HCT116 (cell line): ENCODE measurements at regions of chr11 and their contacts with region 1.

Region 1: GRCh38 chr11:9363954-9364912 is 20.2 kb upstream of the IPO7 start:
- DNase-seq: peak; percentile 97
- ATAC-seq: peak; percentile 88
- H3K4me3 ChIP-seq: peak overlapping the region; percentile 34 to 44
- H3K27ac ChIP-seq: peak overlapping the region; percentile 99
- H3K4me1 ChIP-seq: peaks cover 34 to 48% of the 10 kb centered on the region in 2 experiments
- H3K27me3 ChIP-seq: no peaks in the 10 kb centered on the region
- CTCF ChIP-seq: no peak
- POLR2A ChIP-seq: peak; percentile 8
- RAD21 ChIP-seq: peak; percentile 50

Region 2: DNA sequence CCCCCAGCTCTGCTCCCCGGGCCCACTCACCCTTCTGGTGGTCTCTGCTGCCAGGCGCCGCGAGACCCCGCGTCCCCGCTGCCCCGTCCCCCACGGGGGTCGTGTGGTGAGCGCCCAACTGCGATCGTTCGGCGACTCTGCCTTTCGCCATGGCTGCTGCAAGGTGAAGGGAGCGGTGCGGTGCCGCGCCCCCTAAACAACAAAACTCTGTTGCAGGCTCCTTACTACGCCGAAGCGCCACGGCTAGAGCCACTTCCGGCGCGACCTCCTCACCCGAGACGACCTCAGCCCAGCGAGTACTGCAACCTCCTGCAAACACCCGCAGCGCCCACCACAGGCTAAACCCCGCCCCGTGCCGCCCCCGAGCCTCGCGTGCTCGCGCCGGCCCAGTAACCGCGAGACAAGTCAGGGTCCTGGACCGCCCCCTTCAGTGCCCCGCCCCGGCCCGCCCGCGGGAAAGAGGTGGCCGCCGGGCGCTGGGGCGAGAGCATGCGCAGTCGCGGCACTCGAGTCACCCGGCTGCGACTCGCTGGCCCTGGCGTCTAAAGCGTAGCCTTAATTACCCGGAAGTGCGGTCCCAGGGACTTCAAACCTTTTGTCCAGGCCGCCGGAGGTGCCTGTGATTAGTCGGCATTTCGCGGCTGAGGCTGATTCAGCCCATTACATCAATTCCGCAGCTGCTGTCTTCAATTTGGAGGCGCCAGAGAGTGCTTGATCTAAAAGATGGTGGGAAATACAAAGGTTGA is 49.8 kb before region 1 on chr11 and contains the start of gene TMEM41B:
- CTCF ChIA-PET with region 1: no interaction called
- POLR2A ChIA-PET with region 1: interaction called, 4 read pairs
- RAD21 ChIA-PET with region 1: no interaction called
- intact Hi-C with region 1: loop called (anchors 1 kb)
- DNase-seq: peak; percentile 97
- ATAC-seq: peak; percentile 96
- H3K4me3 ChIP-seq: peak within 1 kb of the TSS; percentile 96 to 97
- H3K27ac ChIP-seq: peak within 1 kb of the TSS; percentile 84
- H3K4me1 ChIP-seq: peaks cover 26 to 35% of the 10 kb centered on the region in 2 experiments; a peak in 3 of 4 replicates
- H3K27me3 ChIP-seq: no peaks in the 10 kb centered on the region
- CTCF ChIP-seq: no peak
- POLR2A ChIP-seq: peak; percentile 71
- RAD21 ChIP-seq: peak; percentile 34; the same call in 1 of the 2 replicates
- total RNA-seq, gene TMEM41B: 67.2 TPM

Region 3: GRCh38 chr11:9617940-9618339 is 253.7 kb after region 1 on chr11:
- CTCF ChIA-PET with region 1: no interaction called
- POLR2A ChIA-PET with region 1: no interaction called
- RAD21 ChIA-PET with region 1: no interaction called
- intact Hi-C with region 1: no loop called
- DNase-seq: no peak
- ATAC-seq: no peak
- H3K4me3 ChIP-seq: no peak overlapping the region
- H3K27ac ChIP-seq: no peak overlapping the region
- H3K4me1 ChIP-seq: peaks cover 15 to 35% of the 10 kb centered on the region in 2 experiments
- H3K27me3 ChIP-seq: no peaks in the 10 kb centered on the region
- CTCF ChIP-seq: no peak
- POLR2A ChIP-seq: no peak
- RAD21 ChIP-seq: no peak